ENCODE measurements at regions of chr11 and their contacts with region 1.

Region 1: DNA sequence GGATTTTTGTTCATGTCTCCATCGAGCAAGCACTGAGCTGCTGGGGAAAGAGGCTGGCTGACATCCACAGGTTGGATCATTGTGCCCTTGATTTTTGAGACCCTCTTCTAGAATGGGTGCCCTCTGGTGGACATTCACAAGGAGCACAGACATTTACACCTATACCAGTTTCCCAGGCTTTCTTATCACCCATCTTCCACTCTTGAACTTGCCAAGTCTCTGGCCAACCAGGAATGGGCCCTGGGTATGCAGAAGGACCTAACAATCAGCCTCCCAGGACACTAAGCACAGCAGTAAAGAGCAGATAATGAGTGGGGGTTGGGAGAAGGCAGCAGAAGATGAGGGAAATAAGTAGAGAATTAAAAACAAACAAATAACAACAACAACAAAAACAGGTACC is 5.7 kb upstream of the INTS4 start:
- DNase-seq: peak; percentile 48
- H3K4me3 ChIP-seq: no peak overlapping the region
- H3K27ac ChIP-seq: no peak overlapping the region
- H3K4me1 ChIP-seq: peaks cover 1% of the 10 kb centered on the region
- H3K27me3 ChIP-seq: no peaks in the 10 kb centered on the region
- CTCF ChIP-seq: peak; percentile 68 to 76

Region 2: GRCh38 chr11:78045851-78046485 is 45.8 kb after region 1 on chr11:
- CTCF ChIA-PET with region 1: no interaction called
- dilution Hi-C with region 1: no loop called
- in situ Hi-C with region 1: no loop called
- intact Hi-C with region 1: loop called (anchors 1 kb)
- DNase-seq: peak; percentile 52
- H3K4me3 ChIP-seq: peak overlapping the region; percentile 14 to 44 (median 36)
- H3K27ac ChIP-seq: no peak overlapping the region
- H3K4me1 ChIP-seq: peaks cover 13% of the 10 kb centered on the region
- H3K27me3 ChIP-seq: no peaks in the 10 kb centered on the region
- CTCF ChIP-seq: peak; percentile 89 to 100